ENCODE measurements at regions of chr1 and their contacts with region 1.

Region 1: DNA sequence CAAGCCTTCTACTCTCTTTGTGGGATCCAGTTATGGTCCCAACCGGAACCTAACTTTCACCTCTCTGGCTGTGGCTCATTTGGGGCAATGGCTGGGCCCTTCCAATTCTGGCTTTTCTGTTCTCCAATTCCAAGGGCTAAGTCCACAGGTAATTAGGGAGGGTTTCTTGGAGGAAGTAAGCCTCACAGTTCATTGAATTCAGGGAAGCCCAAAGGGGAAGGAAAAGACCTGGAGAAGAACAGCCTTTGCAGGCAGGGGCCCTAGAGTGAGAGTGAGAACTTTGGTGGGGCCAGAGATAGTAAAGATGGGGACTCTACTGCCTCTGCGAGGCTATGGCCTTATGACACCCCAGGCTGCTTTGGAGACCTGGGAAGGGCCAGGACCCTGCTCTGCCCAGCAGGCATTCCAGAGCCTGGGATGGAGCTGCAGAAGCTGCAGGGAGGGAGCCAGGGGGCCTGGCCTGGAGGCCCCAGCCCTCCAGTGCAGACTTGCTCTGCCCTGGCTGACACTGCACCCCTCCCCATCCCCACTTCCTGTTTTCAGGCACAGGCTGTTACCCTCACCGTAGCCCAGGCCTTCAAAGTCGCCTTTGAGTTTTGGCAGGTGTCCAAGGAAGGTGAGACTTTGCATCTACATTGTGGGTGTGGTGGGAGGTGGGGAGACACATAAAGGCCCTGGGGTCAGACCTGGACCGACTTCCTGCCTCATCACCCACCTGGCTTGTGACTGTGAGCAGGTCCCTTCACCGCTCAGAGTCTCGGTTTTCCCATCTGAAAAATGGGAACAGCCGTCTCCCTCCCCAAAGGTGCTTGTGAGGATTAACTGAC is 18.9 kb downstream of the LDLRAP1 start:
- H3K4me3 ChIP-seq: no peak overlapping the region
- H3K27ac ChIP-seq: no peak overlapping the region
- H3K4me1 ChIP-seq: no peaks in the 10 kb centered on the region
- CTCF ChIP-seq: no peak

Region 2: GRCh38 chr1:25503551-25504426 is 58.5 kb before region 1 on chr1:
- CTCF ChIA-PET with region 1: no interaction called
- POLR2A ChIA-PET with region 1: no interaction called
- H3K4me3 ChIP-seq: no peak overlapping the region
- H3K27ac ChIP-seq: no peak overlapping the region
- H3K4me1 ChIP-seq: no peaks in the 10 kb centered on the region
- CTCF ChIP-seq: peak; percentile 67

Region 3: DNA sequence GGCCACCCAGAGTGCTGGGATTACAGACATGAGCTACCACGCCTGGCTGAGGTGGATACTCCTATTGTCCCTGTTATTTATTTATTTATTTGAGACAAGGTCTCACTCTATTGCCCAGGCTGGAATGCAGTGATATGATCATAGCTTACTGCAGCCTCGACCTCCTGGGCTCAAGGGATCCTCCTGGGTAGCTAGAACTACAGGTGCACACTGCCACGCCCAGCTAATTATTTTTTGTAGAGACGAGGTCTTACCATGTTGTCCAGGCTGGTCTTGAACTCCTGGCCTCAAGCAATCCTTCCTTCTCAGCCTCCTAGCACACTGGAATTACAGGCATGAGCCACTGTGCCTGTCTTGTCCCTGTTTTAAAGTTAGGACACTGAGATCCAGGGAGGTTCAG is 13.7 kb before region 1 on chr1:
- CTCF ChIA-PET with region 1: interaction called, 4 read pairs
- POLR2A ChIA-PET with region 1: interaction called, 10 read pairs
- H3K4me3 ChIP-seq: no peak overlapping the region
- H3K27ac ChIP-seq: no peak overlapping the region
- H3K4me1 ChIP-seq: peaks cover 8% of the 10 kb centered on the region; the same call in 1 of the 2 replicates
- CTCF ChIP-seq: no peak